IMR-90 (cell line): ENCODE measurements at regions of chr17 and their contacts with region 1.

Region 1: GRCh38 chr17:59837308-59838051 is 55.3 kb downstream of the TUBD1 start:
- DNase-seq: peak; percentile 100
- ATAC-seq: peak; percentile 86
- H3K4me3 ChIP-seq: peak overlapping the region; percentile 83
- H3K27ac ChIP-seq: peak overlapping the region; percentile 96
- H3K4me1 ChIP-seq: 0 out of 2 replicates have a peak, but pooled peaks cover 2% of the 10 kb centered on the region
- H3K27me3 ChIP-seq: no peaks in the 10 kb centered on the region
- CTCF ChIP-seq: no peak
- POLR2A ChIP-seq: peak; percentile 99
- RAD21 ChIP-seq: peak; percentile 14; the same call in 1 of the 2 replicates

Region 2: GRCh38 chr17:59730268-59730834 is 107.1 kb before region 1 on chr17:
- CTCF ChIA-PET with region 1: interaction called, 3 read pairs
- POLR2A ChIA-PET with region 1: interaction called, 10 read pairs
- dilution Hi-C with region 1: no loop called
- in situ Hi-C with region 1: no loop called
- intact Hi-C with region 1: no loop called
- DNase-seq: no peak
- ATAC-seq: no peak
- H3K4me3 ChIP-seq: no peak overlapping the region
- H3K27ac ChIP-seq: no peak overlapping the region
- H3K4me1 ChIP-seq: no peaks in the 10 kb centered on the region; the same call in 1 of the 2 replicates
- H3K27me3 ChIP-seq: no peaks in the 10 kb centered on the region
- CTCF ChIP-seq: no peak
- POLR2A ChIP-seq: no peak
- RAD21 ChIP-seq: no peak

Region 3: DNA sequence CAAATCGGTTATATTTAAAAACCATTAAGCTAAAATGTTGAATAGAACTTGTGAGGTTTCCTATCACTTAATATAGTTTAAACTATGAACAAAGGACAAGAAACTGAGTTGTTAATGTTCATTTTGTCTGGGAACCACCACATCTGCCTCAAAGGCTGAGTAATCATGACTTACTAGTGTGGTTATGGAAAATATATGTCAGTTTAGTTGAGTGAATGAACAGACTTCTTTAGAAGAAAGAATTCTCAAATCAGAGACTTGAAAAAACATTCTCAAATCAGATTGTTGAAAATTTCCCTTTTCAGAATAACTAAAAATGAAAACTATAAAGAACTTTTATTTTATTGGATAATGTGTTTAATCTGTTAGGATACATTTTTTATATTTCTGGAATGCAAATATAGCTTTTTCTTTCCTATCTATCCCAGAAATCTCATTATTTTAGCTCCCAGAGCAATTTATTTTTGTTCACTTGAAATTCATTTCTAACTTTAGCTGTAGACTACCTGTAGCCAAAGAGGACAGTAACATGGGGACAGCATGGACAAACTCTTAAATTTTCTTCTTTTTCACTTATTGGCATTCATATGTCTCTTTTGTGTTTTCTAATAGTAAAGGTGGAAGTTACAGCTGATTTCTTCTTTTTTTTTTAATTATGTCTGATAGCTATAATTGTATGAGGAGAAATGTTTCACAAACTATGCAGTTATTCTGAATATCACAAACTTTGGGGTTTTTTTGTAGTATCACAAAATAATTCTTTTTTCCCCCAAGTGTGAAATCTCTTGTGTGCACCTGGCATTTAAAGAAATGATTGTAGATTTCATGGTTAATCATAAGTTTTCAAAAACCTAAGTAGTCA is 74.7 kb before region 1 on chr17:
- CTCF ChIA-PET with region 1: no interaction called
- POLR2A ChIA-PET with region 1: interaction called, 27 read pairs
- dilution Hi-C with region 1: no loop called
- in situ Hi-C with region 1: no loop called
- intact Hi-C with region 1: no loop called
- DNase-seq: peak; percentile 89
- ATAC-seq: no peak
- H3K4me3 ChIP-seq: no peak overlapping the region
- H3K27ac ChIP-seq: peak overlapping the region; percentile 70; the same call in 1 of the 2 replicates
- H3K4me1 ChIP-seq: peaks cover 21% of the 10 kb centered on the region
- H3K27me3 ChIP-seq: no peaks in the 10 kb centered on the region
- CTCF ChIP-seq: no peak
- POLR2A ChIP-seq: peak; percentile 13; the same call in 1 of the 2 replicates
- RAD21 ChIP-seq: no peak

Region 4: GRCh38 chr17:59786536-59787319 is 50.8 kb before region 1 on chr17:
- CTCF ChIA-PET with region 1: no interaction called
- POLR2A ChIA-PET with region 1: interaction called, 68 read pairs
- dilution Hi-C with region 1: no loop called
- in situ Hi-C with region 1: loop called (anchors 5 kb)
- intact Hi-C with region 1: loop called (anchors 1 kb)
- DNase-seq: peak; percentile 100
- ATAC-seq: peak; percentile 89
- H3K4me3 ChIP-seq: peak overlapping the region; percentile 9; the same call in 1 of the 2 replicates
- H3K27ac ChIP-seq: peak overlapping the region; percentile 93
- H3K4me1 ChIP-seq: peaks cover 16% of the 10 kb centered on the region
- H3K27me3 ChIP-seq: no peaks in the 10 kb centered on the region
- CTCF ChIP-seq: no peak
- POLR2A ChIP-seq: 0 out of 2 replicates have a peak, but pooled peaks have one; percentile 24
- RAD21 ChIP-seq: peak; percentile 23

Region 5: DNA sequence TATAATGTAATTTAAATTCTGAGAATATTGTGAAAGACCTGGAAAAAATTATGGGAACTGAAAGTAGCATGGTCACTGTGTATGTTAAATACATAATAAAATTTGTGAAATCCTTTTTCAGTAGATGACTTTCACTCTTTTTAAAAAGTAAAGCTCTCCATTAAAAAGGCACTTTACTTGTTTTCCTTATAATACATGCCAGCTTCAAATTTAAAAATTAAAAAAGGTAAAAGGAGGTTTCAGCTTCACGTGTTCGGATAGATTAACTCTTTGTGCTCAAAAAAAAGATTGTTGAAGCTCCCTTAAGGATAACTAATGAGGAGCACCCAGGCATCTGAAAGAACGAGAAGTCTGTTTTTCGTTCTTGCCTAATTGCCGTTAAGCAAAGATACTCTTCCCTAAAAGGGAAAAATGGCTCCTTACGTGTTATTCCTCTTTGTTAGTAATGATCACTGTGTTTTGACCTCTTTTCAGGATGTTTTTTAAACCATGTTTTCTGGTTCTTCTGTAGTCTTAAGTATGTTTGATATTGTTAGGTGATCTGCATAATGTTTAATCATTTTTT is 32.5 kb before region 1 on chr17:
- CTCF ChIA-PET with region 1: no interaction called
- POLR2A ChIA-PET with region 1: interaction called, 13 read pairs
- dilution Hi-C with region 1: no loop called
- in situ Hi-C with region 1: no loop called
- intact Hi-C with region 1: no loop called
- DNase-seq: no peak
- ATAC-seq: no peak
- H3K4me3 ChIP-seq: peak overlapping the region; percentile 37; the same call in 1 of the 2 replicates
- H3K27ac ChIP-seq: peak overlapping the region; percentile 91; the same call in 1 of the 2 replicates
- H3K4me1 ChIP-seq: peaks cover 3% of the 10 kb centered on the region
- H3K27me3 ChIP-seq: no peaks in the 10 kb centered on the region
- CTCF ChIP-seq: no peak
- POLR2A ChIP-seq: no peak
- RAD21 ChIP-seq: no peak

Region 6: DNA sequence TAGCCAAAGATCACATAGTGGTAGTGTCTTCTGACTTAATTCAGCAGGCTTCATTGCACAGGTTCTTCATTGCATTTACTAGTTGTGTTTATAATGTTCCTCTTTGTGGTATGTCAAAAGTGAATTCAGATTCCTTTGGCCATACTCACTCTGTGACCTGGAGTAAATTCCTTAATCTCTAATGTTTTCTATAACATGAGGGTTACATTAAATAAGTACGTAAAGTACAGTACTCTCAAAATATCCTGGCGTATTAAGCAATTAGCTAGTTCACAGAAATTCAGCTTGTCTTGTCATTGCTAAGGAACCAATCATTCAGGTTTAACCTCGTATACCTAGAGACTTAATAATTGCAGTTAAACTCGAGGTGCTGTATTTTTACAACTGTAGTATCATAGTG is 59.6 kb after region 1 on chr17:
- CTCF ChIA-PET with region 1: no interaction called
- POLR2A ChIA-PET with region 1: interaction called, 11 read pairs
- dilution Hi-C with region 1: no loop called
- in situ Hi-C with region 1: no loop called
- intact Hi-C with region 1: no loop called
- DNase-seq: peak; percentile 71
- ATAC-seq: peak; percentile 3; the same call in 1 of the 2 replicates
- H3K4me3 ChIP-seq: no peak overlapping the region
- H3K27ac ChIP-seq: no peak overlapping the region
- H3K4me1 ChIP-seq: peaks cover 2% of the 10 kb centered on the region; the same call in 1 of the 2 replicates
- H3K27me3 ChIP-seq: no peaks in the 10 kb centered on the region
- CTCF ChIP-seq: no peak
- POLR2A ChIP-seq: no peak
- RAD21 ChIP-seq: no peak